Gastrocnemius medialis (tissue), 4 donors: ENCODE measurements at regions of chr9 and their contacts with region 1.

Region 1: GRCh38 chr9:114163517-114163951 is 8.2 kb downstream of the COL27A1 start:
- DNase-seq: peak; percentile 41 to 52
- ATAC-seq: peak; percentile 65 to 72
- H3K4me3 ChIP-seq: no peak overlapping the region
- H3K27ac ChIP-seq: peak overlapping the region; percentile 18 to 52 (median 34)
- H3K4me1 ChIP-seq: peaks cover 31 to 33% of the 10 kb centered on the region in 2 donors
- H3K27me3 ChIP-seq: no peaks in the 10 kb centered on the region
- CTCF ChIP-seq: no peak
- POLR2A ChIP-seq: no peak

Region 2: GRCh38 chr9:114108016-114108833 is 55.3 kb before region 1 on chr9:
- in situ Hi-C with region 1: no loop called
- intact Hi-C with region 1: no loop called
- DNase-seq: peak; percentile 42 to 48
- ATAC-seq: peak; percentile 85 to 89
- H3K4me3 ChIP-seq: no peak overlapping the region
- H3K27ac ChIP-seq: no peak overlapping the region
- H3K4me1 ChIP-seq: no peaks in the 10 kb centered on the region
- H3K27me3 ChIP-seq: no peaks in the 10 kb centered on the region
- CTCF ChIP-seq: peak; percentile 89 to 99 (median 94)
- POLR2A ChIP-seq: no peak

Region 3: GRCh38 chr9:114271641-114272081 is 108.1 kb after region 1 on chr9:
- in situ Hi-C with region 1: loop called in 1 of 4 experiments (anchors 10 kb)
- intact Hi-C with region 1: no loop called
- DNase-seq: peak; percentile 27 to 57
- ATAC-seq: peak; percentile 70 to 82
- H3K4me3 ChIP-seq: no peak overlapping the region
- H3K27ac ChIP-seq: no peak overlapping the region
- H3K4me1 ChIP-seq: peaks cover under 1 to 2% of the 10 kb centered on the region in 2 donors
- H3K27me3 ChIP-seq: no peaks in the 10 kb centered on the region
- CTCF ChIP-seq: peak; percentile 47 to 74 (median 63)
- POLR2A ChIP-seq: no peak

Region 4: DNA sequence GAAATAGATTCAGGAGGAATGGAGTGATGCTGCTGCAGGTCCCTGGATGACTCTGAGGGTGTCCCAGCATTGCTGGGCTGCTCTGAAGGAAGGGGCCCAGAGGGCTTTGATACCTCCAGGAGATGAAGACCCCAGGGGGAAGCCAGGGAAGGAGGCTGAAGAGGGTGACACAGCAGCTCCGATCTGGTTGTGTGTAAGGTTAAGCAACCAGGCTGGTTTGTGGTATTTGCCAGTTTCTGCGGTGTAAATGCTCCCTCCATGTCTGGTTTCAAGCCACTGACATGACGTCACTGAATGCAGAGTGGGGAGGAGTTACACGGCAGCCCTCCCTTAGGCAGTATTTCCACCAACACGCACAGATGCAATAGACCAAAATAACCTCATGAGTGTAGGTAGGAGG is 119.4 kb after region 1 on chr9:
- in situ Hi-C with region 1: loop called in 3 of 4 experiments (anchors 10 kb)
- intact Hi-C with region 1: no loop called
- DNase-seq: no peak
- ATAC-seq: no peak
- H3K4me3 ChIP-seq: no peak overlapping the region
- H3K27ac ChIP-seq: no peak overlapping the region
- H3K4me1 ChIP-seq: no peaks in the 10 kb centered on the region
- H3K27me3 ChIP-seq: no peaks in the 10 kb centered on the region
- CTCF ChIP-seq: no peak
- POLR2A ChIP-seq: no peak

Region 5: GRCh38 chr9:114472765-114473446 is 309.4 kb after region 1 on chr9:
- in situ Hi-C with region 1: no loop called
- intact Hi-C with region 1: no loop called
- DNase-seq: no peak
- ATAC-seq: no peak
- H3K4me3 ChIP-seq: no peak overlapping the region
- H3K27ac ChIP-seq: no peak overlapping the region
- H3K4me1 ChIP-seq: no peaks in the 10 kb centered on the region
- H3K27me3 ChIP-seq: no peaks in the 10 kb centered on the region
- CTCF ChIP-seq: no peak
- POLR2A ChIP-seq: no peak